AG04449 (cell line): ENCODE measurements at regions of chr10 and their contacts with region 1.

Region 1: GRCh38 chr10:68301790-68302502 is 29.9 kb upstream of the HNRNPH3 start:
- DNase-seq: peak; percentile 28
- H3K4me3 ChIP-seq: no peak overlapping the region
- CTCF ChIP-seq: peak; percentile 28

Region 2: DNA sequence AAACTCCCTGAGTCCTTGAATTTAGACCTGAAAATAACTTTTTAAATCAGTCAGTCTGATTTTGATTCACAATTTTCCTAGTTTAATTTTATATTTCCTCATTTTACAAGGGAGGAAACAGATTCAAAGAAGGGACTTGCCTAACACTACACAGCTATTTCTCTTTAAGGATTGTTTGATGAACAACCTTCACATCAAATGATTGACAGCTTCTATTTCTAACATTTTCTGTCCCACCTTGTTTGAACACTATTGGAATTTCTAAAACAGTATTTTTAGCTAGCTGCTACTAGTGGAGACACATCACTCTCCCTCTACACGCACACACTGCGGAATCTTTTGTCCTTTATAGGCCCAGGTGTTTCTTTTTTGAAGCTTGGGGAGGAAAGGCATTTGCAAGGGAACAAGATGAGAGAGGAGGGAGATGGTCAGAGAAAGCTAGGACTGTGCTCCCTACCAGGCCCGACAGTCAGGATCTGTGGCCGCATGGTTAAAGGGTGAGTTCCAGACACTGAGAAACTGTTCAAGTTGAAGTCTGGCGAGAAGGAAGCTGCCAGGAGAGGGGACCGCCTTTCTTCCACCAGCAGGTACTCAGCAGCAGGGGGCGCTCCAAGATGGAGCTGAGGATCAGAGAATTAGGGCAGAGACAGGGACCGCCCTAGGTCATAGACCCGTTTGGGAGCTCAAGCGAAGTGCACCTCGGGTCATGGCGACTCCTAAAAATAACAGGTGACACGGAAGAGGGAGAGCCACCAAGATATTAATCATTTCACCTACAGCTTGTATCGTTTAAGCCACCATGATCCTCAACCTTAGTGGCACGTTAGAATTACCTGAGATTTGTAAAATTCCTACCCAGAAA is 513.7 kb before region 1 on chr10:
- CTCF ChIA-PET with region 1: interaction called, 16 read pairs
- POLR2A ChIA-PET with region 1: no interaction called
- DNase-seq: no peak
- H3K4me3 ChIP-seq: no peak overlapping the region
- CTCF ChIP-seq: peak; percentile 35

Region 3: DNA sequence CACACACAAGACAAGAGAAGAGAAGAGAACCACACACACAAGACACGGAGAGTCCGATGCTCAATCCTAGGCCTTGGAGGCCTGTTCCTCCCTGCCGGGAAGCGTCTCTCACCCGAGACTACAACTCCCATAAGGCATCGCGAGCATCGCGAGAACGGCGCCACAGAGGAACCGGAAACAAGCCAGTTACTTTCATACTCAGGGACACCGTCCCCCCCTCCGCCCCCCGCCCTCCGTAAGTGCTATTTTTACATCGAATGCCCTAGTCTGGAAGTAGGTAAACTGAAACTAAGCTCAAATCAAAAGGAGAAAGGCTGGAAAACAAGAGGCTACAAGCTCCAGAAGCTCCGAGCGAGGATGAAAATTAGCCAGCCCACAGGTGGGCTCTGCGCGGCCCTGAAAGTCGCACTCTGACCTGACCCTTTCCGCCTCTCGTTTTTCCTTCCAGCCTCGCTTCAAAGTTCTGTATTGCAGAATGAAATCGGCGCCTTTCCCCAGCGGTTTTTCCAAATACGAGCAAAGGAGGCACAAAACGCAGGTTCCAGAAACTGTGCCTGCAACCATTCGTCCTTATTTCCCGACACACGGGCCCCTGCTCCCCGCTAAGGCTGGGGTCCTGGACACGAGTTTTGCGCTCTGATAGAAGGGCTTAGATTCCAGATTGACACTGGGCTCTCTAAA is 452.5 kb before region 1 on chr10:
- CTCF ChIA-PET with region 1: interaction called, 28 read pairs
- POLR2A ChIA-PET with region 1: no interaction called
- DNase-seq: peak; percentile 69
- H3K4me3 ChIP-seq: peak overlapping the region; percentile 76
- CTCF ChIP-seq: no peak

Region 4: DNA sequence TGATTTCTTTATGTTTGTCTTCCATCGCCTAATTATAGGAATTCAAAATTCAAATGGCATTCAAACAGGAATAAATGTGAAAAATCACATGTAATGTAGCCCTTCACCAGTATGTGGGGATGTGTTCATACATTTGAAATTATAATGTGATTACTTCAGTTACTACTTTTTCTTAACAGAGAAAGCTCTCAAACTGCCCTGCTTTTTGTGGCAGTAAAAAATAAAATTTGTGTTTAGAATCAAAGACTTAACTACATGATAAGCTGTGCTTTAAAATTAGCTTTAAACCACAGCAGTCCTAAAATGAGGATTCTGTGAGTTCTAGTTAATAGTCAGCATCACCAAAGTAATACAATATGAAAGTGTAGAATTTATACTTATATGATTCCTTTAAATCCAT is 219.1 kb before region 1 on chr10:
- CTCF ChIA-PET with region 1: interaction called, 25 read pairs
- POLR2A ChIA-PET with region 1: no interaction called
- DNase-seq: no peak
- H3K4me3 ChIP-seq: no peak overlapping the region
- CTCF ChIP-seq: peak; percentile 53

Region 5: DNA sequence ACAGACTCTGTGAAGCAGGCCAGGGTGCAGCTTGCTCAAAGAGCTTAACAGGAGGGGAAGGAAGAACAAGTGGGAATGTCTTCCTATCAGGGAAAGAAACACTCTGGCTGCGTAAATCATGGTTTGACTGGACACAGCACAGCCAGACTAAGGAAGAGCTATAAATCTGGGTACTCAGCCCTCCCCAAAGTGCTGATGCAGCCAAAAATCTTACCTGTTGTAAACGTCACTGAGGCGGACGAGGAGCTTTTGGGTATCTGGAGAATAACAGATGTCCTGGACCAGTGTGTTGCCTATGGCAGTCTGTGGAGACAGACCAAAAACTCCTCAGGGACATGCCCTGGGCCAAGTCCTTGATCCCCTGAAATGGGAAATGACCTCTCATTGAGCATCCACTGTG is 13.2 kb before region 1 on chr10:
- CTCF ChIA-PET with region 1: interaction called, 37 read pairs
- POLR2A ChIA-PET with region 1: no interaction called
- DNase-seq: no peak
- H3K4me3 ChIP-seq: no peak overlapping the region
- CTCF ChIP-seq: no peak

Region 6: DNA sequence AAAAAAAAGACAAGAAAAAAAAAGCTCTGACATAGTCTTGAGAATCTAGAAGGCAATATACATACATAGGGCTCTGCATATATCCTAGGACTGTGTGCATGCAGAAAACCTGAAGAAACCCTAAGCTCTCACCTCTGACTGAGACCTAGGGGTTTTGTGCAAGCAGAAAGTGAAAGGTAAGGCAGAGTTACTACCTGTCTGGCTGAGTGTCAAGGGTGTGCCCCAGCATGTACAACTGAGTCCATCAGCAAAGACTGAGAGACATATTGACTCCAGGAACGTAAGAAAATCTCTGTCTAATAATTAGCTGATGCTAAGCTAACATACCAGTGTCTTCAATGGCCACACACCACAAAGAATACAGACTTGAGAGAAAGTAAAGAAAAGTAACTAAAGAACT is 13.6 kb after region 1 on chr10:
- CTCF ChIA-PET with region 1: interaction called, 29 read pairs
- POLR2A ChIA-PET with region 1: no interaction called
- DNase-seq: no peak
- H3K4me3 ChIP-seq: no peak overlapping the region
- CTCF ChIP-seq: no peak

Region 7: DNA sequence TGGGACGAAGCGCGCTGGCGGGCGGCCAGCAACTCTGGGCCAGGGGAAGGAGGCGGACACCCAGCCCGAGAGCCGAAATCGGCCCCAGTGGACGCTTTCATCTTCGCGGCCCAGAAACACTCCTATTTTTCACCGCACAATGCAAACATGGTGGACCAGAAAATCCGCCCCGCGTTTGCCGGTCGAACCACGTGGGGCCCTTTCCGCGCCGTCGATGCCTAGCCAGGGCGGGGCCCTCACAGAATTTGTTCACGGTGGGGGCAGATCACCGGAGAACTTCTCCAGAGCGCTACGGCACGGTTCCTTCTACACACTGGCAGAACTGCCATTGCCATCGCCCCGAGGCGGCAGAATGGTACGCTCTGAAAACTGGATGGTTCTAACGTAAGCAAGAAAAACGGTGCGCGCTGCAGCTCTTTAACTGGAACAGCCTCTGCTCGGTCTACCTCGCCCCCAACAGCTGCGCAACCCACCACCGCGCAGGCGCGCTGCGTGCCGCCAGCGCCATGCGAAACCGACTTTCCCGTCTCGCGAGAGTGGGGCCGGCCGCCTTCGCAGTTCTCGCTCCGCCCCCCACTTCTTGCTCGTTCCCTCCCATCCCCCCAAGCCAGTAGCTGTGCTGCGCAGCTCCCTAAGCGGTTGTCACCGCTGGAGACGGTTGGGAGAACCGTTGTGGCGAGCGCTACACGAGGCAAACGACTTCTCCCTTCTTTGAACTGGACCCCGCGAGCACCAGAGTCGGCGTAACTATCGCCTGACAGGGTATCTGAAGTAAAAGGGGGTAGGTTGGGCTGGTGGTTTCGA is 29.7 kb after region 1 on chr10 and contains the start of gene HNRNPH3:
- CTCF ChIA-PET with region 1: interaction called, 11 read pairs
- POLR2A ChIA-PET with region 1: no interaction called
- DNase-seq: peak; percentile 78
- H3K4me3 ChIP-seq: peak within 1 kb of the TSS; percentile 91
- CTCF ChIP-seq: no peak

Region 8: DNA sequence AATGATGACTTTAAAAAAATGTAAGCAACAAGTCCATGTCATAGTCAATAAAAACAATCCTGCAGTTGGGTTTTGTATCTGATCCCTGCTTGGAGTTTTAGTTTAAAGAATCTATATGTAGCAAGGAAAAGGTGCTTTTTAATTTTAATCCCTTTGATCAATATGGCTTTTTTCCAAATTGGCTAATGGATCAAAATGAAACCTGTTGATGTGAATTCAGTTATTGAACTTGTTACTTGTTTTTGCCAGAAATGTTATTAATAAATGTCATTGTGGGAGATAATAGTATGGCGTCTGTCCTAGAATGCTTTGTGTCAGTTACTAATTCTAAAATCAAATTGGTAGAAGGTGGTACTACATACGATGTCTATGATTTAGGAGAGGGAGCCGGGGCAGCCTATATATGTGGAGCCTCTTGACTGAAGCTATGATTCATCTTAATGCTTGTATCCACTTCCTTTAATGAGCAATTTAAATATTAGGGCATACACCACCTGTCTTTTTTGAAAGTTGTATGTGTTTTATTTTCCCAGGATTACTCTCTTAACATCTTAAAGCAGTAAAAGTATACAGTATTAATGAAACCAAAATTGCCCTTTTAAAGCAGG is 41.1 kb after region 1 on chr10:
- CTCF ChIA-PET with region 1: no interaction called
- POLR2A ChIA-PET with region 1: no interaction called
- DNase-seq: no peak
- H3K4me3 ChIP-seq: no peak overlapping the region
- CTCF ChIP-seq: no peak